Dorsolateral prefrontal cortex (tissue), 120 donors: ENCODE measurements at regions of chr18 and their contacts with region 1.

Region 1: DNA sequence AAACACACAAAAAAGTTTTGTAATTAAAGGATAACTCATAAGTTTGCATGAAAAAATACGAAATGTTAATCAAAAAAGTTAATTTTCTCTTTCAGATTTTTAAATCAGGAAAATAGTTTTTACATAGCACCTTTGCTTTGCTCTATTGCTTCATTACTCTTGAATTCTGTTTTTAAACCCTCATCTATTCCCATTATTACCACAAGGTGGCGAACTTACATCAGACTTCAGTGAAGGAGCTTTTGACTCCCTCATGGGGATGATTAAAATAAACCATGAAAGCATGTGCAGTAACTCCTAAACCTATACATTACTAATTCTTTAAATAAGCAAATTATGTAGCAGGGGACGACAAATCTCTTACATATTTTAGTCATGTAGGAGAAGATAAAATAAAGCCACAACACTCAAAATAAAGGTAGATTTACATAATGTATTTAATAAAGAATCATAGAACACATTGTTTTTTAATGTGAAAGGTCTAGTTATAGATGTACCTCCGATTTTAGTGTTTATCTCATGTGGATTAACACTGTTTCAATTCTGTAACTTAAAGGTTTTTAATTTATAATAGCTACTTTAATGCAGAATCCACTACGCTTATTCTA is 105.2 kb downstream of the NETO1 start:
- DNase-seq: no peak
- H3K4me3 ChIP-seq: no peak overlapping the region
- H3K27ac ChIP-seq: no peak overlapping the region
- H3K27me3 ChIP-seq: no peaks in the 10 kb centered on the region
- CTCF ChIP-seq: peak; percentile 61 to 94 (median 86)

Region 2: DNA sequence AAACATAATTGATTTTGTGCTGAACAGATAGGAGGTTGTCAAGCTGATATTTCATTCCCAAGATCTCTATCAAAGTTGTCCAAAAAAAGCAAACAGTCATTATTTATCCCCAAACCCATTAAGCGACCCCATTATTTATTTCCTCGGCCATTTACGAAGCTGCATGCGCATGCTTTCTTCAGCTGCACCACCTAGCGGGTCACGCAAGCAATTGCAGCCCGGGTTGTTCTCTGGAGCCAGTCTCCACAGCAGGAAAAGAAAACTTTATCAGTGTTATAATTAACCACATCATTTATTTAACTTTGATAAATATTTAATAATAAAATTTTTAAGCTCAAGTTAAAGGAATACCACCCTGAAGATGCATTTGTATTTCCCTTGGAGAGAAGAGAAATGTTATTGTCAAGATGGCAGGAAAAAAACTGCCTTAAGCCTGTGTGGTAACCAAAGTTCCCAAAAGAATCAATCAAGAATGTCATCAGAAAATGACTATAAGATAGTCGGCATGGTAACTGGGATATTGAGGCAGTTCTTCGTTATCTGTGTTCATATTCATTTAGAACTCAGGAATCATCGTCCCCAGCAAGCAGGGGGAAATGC is 1080.3 kb after region 1 on chr18:
- intact Hi-C with region 1: loop called (anchors 5 to 10 kb)
- DNase-seq: peak in 9 of 10 donors; percentile 32 to 75 (median 61)
- H3K4me3 ChIP-seq: peak overlapping the region in 35 of 59 donors; percentile 1 to 57 (median 29)
- H3K27ac ChIP-seq: no peak overlapping the region
- H3K27me3 ChIP-seq: peaks cover 0 to 4% (median 0%) of the 10 kb centered on the region in 45 donors
- CTCF ChIP-seq: peak; percentile 82 to 98 (median 91)

Region 3: DNA sequence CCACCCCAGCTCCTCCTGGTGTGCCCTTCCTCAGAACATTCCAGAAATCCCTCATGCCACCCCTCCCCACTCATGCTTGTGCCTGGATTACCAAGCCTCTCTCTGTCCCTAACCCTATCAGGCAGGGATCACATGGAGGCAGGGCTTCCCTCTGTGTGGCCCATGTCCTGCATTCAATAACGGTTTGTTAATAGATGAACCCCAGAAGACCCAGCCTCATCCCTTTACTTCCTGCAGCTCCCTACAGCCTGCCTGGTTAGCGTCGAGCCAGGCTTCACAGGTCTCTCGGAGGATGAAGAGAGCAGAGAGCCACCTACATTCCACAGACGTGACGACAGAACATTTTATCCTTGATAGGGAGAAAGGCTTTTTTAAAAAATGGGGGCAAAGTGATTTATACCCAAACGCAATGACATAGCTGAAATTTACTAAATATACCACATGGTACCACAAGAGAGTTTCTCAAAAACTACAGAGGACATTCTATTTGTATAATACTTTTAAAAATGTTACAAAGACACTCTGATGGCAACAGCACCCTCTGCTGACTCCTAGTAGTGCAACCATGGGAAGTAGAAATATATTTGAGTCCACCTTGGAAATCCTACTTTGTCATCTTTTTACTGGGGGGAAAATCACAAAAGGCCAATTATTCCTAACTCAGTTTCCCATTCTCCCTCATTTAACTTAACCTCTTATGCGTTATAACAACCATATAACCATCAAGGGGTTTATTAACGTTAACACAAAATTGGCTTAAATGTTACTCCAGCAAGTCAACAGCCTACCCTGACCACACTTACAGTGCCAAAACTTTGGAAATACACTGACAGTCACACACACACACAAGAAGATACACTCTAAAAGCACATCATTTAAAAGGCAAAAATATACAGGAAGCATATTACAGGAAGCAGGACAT is 1354.3 kb after region 1 on chr18:
- intact Hi-C with region 1: loop called in 1 of 2 experiments (anchors 5 kb)
- DNase-seq: peak in 1 of 10 donors; percentile 51
- H3K4me3 ChIP-seq: peak overlapping the region in 1 of 59 donors; percentile 24
- H3K27ac ChIP-seq: peak overlapping the region in 16 of 59 donors; percentile 4 to 61 (median 28)
- H3K27me3 ChIP-seq: no peaks in the 10 kb centered on the region
- CTCF ChIP-seq: peak; percentile 48 to 79 (median 68)